Calu3 (cell line): ENCODE measurements at regions of chr11 and their contacts with region 1.

Region 1: DNA sequence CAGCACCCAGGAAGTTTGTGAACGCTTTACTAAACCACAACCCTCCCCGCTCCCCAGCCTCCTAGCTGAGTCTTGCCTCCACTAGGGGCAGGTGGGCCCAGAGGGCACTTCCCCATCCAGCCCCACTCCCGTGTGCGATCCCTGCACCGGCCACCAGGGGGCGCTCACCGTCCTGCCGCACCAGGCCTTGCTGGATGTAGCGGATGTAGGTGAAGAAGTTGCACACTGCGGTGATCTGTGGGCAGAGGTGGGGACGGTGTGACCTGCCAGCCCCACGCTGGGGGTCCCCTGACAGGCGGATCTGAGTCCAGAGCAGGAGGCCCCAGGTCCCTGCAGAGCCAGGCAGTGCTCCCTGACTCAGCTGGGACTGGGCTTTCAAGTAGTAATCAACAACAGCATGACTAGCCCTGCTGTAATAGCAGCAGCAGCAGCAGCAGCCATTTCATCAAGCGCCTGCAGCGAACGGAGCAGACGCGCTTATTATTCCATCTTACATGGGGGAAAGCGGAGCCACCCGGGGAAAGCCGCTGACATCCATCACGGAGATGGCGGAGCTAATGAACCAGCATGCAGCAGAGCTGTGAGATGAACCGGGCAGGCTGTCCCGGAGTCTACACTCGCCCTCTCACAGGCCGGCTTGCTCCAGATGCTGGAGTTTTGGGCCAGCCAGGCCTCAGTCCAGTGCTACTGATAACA is 7.9 kb upstream of the FADS3 start:
- DNase-seq: peak; percentile 95
- H3K4me3 Mint-ChIP-seq: no peak overlapping the region
- H3K27ac Mint-ChIP-seq: peak overlapping the region; percentile 37
- H3K4me1 Mint-ChIP-seq: no peaks in the 10 kb centered on the region
- H3K27me3 Mint-ChIP-seq: peaks cover 45% of the 10 kb centered on the region
- CTCF ChIP-seq: peak; percentile 99

Region 2: DNA sequence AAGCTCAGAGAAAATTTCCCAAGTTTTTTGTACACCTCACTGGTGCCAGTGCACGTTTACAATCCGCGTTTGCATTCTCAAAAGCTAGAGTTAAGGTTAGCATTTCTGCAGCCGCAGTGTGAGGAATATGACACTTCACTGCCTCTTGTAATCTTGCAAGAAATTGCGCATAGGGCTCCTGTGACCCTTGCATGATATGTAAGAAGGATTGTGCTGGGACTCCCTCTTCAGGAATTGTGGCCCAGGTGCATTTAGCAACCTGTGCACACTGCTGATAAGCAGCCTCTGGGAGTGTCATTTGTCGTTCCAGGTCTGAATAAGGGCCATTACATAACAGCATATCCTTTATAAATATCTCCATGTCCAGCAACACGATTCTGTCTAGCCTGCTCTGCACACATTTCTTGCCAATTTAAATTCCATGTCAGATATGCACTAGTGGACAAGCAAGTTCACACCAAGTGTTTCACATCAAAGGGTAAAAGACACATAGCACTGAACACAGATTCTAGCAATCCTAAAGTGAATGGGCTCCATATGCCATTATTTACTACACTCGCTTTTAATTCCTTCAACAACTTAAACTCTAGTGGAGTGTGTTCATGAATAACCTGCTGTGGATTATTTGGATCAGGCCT is 155.3 kb after region 1 on chr11:
- CTCF ChIA-PET with region 1: interaction called, 14 read pairs
- intact Hi-C with region 1: loop called (anchors 1 kb)
- DNase-seq: peak; percentile 66
- H3K4me3 Mint-ChIP-seq: peak overlapping the region; percentile 8
- H3K27ac Mint-ChIP-seq: no peak overlapping the region
- H3K4me1 Mint-ChIP-seq: peaks cover 16% of the 10 kb centered on the region
- H3K27me3 Mint-ChIP-seq: no peaks in the 10 kb centered on the region
- CTCF ChIP-seq: peak; percentile 62

Region 3: DNA sequence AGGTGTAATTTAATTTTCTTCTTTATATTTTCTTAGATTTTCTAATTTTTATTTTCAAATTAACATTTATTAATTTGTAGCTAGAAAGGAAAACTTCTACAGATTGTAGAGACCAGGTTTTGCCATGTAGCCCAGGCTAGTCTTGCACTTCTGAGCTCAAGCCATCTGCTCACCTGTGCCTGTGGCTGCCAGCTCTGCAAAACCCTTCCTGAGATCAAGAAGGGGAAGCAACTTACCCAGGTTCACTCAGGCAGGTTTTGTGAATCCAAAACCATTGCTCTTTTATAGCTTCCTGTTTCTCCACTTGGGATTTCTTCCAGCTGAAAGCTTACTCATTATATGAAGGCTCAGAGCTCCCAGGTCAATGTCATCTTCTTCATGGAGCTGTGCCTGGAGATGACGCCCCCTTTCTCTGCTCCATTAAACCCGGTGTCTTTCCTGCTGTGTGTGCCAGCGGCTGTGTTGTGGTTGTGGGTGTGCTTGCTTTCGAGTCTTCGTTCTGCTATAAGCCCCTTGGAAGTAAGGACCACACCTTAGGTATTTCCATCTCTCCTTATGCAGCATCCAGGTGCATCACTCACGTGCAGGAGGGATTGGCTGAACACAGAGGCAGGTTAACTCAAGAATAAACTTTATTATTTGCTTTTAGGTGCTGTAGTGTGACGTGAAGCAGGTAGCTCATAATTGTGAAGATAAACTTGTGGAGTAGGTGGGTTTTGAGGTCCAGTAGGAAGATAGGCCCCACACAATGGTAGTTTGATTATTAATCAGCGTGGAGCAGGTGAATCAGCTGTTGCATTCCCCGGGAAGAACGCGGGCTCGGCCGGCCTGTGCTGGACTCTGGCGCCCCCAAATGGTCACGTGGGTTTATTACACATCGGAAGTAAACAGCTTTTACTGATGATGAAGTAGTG is 182.3 kb after region 1 on chr11:
- CTCF ChIA-PET with region 1: interaction called, 72 read pairs
- intact Hi-C with region 1: loop called (anchors 1 kb)
- DNase-seq: peak; percentile 87
- H3K4me3 Mint-ChIP-seq: no peak overlapping the region
- H3K27ac Mint-ChIP-seq: no peak overlapping the region
- H3K4me1 Mint-ChIP-seq: no peaks in the 10 kb centered on the region
- H3K27me3 Mint-ChIP-seq: no peaks in the 10 kb centered on the region
- CTCF ChIP-seq: peak; percentile 90

Region 4: GRCh38 chr11:62108017-62108750 is 208.9 kb after region 1 on chr11:
- CTCF ChIA-PET with region 1: interaction called, 47 read pairs
- intact Hi-C with region 1: loop called (anchors 1 kb)
- DNase-seq: peak; percentile 48
- H3K4me3 Mint-ChIP-seq: no peak overlapping the region
- H3K27ac Mint-ChIP-seq: no peak overlapping the region
- H3K4me1 Mint-ChIP-seq: peaks cover 9% of the 10 kb centered on the region
- H3K27me3 Mint-ChIP-seq: peaks cover 18% of the 10 kb centered on the region
- CTCF ChIP-seq: peak; percentile 69